ENCODE measurements at regions of chr1 and their contacts with region 1.

Region 1: DNA sequence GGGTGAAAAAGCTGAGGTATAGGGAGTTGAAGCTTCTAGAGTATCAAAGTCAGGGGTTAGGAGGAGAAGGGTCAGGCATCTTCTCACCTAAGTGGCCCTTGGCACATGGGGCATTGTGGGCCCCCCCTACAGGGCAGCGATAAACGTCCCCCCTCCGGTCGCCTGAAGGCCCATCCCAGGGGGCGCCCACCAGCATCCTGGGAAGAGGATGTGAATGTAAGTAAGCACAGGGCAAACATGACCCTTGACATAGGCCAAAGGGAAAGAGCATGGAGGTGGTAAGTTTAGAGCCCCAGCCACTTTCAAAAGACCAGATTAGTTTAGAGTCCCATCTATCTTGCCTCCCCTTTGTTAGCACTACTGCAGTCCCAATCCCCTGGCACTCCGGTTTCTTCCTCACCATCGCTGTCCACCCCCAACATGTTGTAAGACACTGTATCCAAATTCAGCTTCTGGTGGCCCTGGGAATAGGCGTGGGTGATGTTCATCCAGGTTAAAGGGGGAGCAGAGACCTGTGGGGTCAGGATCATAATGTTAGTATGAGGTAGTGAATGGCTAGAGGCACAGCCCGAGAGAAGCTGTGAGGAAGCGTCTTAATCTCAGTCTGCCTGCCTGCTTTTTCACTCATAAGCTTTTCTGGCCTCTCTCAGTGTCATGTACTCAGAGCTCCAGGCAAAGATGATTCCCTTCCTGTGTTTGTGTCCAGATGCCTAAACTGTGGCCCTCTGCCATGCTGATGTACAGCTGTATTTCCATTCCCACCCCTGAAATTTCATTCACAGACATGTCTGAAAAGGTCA is 2.7 kb downstream of the ITGA10 start:
- DNase-seq: peak in 1 of 7 donors; percentile 38
- H3K4me3 ChIP-seq: no peak overlapping the region
- H3K27ac ChIP-seq: no peak overlapping the region
- H3K4me1 ChIP-seq: peaks cover 4% of the 10 kb centered on the region in 2 donors
- H3K27me3 ChIP-seq: no peaks in the 10 kb centered on the region
- CTCF ChIP-seq: no peak
- POLR2A ChIP-seq: no peak

Region 2: DNA sequence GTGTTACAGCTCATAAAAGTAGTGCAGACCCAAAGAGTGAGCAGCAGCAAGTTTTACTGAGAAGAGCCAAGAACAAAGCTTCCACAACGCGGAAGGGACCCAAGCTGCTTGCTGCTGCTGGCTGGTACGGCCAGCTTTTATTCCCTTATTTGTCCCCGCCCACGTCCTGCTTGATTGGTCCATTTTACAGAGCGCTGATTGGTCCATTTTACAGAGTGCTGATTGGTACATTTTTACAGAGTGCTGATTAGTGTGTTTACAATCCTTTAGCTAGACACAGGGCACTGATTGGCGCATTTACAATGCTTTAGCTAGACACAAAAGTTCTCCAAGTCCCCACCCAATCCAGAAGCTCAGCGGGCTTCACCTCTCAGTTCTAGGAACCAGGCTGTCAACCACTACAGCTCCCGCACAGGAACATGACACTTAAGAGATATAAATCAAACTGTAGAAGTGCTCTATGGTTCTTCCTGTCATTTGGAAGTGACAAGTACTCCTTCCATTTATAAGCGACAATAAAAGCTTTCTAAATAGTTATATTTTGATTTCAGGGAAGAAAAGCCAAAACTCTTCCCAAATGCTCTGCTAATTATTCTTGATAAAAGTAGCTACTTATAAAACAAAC is 111.8 kb before region 1 on chr1:
- intact Hi-C with region 1: no loop called
- DNase-seq: no peak
- H3K4me3 ChIP-seq: no peak overlapping the region
- H3K27ac ChIP-seq: no peak overlapping the region
- H3K4me1 ChIP-seq: no peaks in the 10 kb centered on the region
- H3K27me3 ChIP-seq: no peaks in the 10 kb centered on the region
- CTCF ChIP-seq: no peak
- POLR2A ChIP-seq: no peak

Region 3: DNA sequence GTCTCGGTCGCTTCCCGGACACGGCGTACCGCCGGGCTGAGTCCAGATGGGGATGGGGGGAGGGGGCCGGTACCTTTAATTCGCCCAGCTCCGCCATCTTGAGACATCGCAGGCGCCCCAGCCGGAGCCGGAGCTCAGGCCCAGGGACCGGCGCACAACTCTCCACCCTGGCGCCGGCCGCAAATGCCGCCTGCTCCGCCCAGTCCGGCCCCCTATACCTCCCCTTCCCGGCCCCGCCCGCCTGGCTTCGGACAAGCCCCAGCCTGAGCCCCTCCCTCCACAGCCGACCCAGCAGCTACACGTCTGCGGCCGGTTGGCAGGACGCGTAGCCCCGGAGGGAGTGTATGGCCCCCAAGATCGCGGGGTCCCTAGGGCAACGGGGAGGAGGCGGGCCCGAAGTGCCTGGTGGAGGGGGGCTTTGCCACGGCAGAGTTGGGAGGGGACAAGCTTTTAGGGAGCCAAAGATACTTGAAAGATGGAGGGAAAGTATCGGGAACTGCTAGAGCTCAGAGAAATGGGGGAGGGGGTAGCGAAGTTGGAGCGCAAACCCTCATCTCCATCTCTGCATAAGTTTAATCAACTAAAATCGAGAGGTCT is 48.2 kb before region 1 on chr1 and contains the start of gene PIAS3:
- intact Hi-C with region 1: loop called in 1 of 2 experiments (anchors 10 kb)
- DNase-seq: peak; percentile 94 to 97 (median 95)
- H3K4me3 ChIP-seq: peak within 1 kb of the TSS; percentile 62 to 92 (median 82)
- H3K27ac ChIP-seq: peak within 1 kb of the TSS; percentile 23 to 93 (median 76)
- H3K4me1 ChIP-seq: peaks cover 4 to 15% of the 10 kb centered on the region in 2 donors
- H3K27me3 ChIP-seq: no peaks in the 10 kb centered on the region
- CTCF ChIP-seq: no peak
- POLR2A ChIP-seq: peak; percentile 35 to 78
- total RNA-seq, gene PIAS3: 7.5 to 34.1 (median 20.8) TPM